ENCODE measurements at regions of chr13 and their contacts with region 1.

Region 1: DNA sequence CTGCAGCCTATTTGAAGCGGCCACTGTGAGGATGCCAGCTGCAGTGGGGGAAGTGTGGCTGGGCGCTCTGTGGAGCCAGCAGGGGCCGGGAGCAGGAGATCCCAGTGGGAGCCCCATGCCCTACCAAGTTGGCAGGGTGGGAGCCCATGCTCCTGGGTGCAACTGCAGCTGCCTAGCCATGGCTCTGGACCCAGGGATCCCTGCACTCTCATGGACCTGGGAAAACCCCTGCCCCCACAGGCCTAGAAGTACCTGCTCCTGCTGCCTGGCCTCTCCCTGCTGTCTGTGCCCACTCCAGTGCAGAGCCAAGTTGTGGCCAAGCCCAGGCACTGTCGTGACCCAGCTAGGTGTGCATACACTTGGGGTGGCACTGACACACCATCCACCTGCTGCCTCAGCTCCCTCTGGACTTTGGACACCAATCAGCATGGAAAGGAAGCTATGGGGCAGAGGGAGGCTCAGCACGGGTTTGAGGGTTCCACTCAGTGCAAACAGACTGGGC is 20.9 kb downstream of the LIG4 start:
- DNase-seq: no peak
- H3K4me3 ChIP-seq: no peak overlapping the region
- H3K27ac ChIP-seq: peak overlapping the region; percentile 33
- H3K4me1 ChIP-seq: peaks cover 37% of the 10 kb centered on the region
- H3K27me3 ChIP-seq: no peaks in the 10 kb centered on the region
- CTCF ChIP-seq: no peak

Region 2: DNA sequence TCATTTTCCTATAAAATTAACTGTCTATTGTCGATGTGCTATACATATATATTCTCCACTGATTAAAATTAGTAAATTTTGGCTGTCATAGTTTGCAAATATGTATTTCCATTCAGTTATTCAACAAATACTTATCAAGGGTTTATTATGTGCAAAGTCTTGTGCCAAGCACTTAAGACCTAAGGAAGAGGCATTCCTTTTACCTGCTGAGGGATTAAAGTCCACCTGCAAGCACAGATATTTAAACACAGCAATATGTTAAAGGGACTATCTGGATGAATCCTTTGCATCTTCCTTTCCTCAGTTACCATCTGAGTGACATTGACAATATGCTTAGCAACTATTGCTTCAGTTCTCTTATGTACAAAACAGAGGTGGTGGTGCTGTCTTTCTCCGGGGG is 68.4 kb before region 1 on chr13:
- CTCF ChIA-PET with region 1: no interaction called
- dilution Hi-C with region 1: loop called (anchors 5 kb)
- in situ Hi-C with region 1: no loop called
- intact Hi-C with region 1: no loop called
- DNase-seq: no peak
- H3K4me3 ChIP-seq: no peak overlapping the region
- H3K27ac ChIP-seq: no peak overlapping the region
- H3K4me1 ChIP-seq: no peaks in the 10 kb centered on the region
- H3K27me3 ChIP-seq: no peaks in the 10 kb centered on the region
- CTCF ChIP-seq: no peak

Measured in mammary epithelial cell (primary cell).